ENCODE measurements at regions of chrX and their contacts with region 1.

Region 1: DNA sequence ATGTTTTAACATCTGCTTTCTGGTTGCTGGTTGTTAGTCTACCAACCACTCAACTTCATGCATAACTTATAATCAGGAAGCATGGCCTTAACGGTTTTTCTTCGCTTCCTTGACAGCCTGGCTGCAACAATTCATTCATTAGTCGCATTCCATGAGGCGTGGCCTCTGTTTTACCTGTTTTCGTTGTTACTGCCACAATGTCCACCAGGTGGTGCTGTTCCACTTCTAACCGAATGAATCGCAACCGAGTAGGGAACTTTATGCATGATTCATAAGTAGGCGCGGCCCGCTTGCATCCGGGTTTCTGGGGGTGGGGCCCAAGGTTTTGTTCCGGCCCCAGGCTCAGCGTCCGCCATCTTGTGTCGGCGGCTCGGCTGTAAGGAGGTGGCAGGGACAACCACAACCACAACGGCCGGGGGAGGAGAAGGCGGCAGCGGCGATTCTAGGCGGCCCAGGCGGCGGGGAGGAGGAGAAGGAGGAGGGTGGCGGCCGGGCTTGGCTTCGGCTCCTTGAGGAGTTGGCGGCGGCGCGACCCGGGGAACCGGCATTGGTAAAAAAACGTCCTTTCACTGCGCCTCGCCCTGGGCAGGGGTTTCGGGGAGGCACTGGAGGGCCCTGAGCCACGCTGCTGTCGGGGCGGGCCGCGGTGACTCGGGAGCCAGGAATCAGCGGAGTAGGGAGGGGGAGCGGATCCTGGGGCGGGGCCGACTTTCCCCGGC is at the start of gene UBA1:
- DNase-seq: peak; percentile 99
- H3K4me3 Mint-ChIP-seq: peak within 1 kb of the TSS; percentile 98
- H3K27ac Mint-ChIP-seq: peak within 1 kb of the TSS; percentile 99
- H3K4me1 Mint-ChIP-seq: peaks cover 28% of the 10 kb centered on the region
- H3K27me3 Mint-ChIP-seq: peaks cover 4% of the 10 kb centered on the region
- CTCF ChIP-seq: peak; percentile 60
- total RNA-seq, gene UBA1: 248 and 293 TPM in 2 replicates

Region 2: GRCh38 chrX:47068214-47068613 is 125.4 kb before region 1 on chrX:
- CTCF ChIA-PET with region 1: no interaction called
- POLR2A ChIA-PET with region 1: no interaction called
- intact Hi-C with region 1: no loop called
- DNase-seq: no peak
- H3K4me3 Mint-ChIP-seq: no peak overlapping the region
- H3K27ac Mint-ChIP-seq: no peak overlapping the region
- H3K4me1 Mint-ChIP-seq: no peaks in the 10 kb centered on the region
- H3K27me3 Mint-ChIP-seq: peaks cover 45% of the 10 kb centered on the region
- CTCF ChIP-seq: no peak

Region 3: DNA sequence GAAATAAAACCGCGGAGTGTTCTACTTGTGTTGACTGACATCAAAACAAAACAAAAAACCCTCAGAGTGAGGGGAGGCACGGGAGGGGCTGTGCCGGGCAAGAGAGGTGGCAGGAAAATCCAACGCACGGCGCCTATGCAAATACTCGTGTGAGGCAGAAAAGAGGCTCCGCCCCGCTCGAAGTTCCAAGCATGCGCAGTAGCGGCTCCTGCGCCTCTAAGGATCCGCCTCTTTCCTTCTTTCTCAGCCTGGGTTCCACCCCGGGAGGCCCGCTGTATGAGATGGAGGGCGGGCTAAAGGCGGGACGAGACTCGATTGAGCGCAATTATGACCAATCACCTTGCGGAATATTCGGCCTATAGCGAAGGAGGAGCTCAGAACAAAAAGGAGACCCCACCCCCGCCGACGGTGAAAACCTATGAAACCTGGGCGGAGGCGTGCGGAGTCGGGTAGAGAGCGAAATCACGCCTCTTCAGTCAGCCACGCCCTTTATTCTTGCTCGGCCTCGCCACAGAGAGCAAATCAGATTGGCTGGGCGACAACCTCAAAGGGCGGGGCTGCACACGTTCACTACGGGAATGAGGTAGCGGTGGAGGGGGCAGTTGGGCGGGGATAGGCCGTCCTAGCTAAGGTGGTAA is 24.1 kb after region 1 on chrX:
- CTCF ChIA-PET with region 1: interaction called, 6 read pairs
- POLR2A ChIA-PET with region 1: interaction called, 25 read pairs
- intact Hi-C with region 1: loop called (anchors 1 kb)
- DNase-seq: peak; percentile 100
- H3K4me3 Mint-ChIP-seq: peak overlapping the region; percentile 82
- H3K27ac Mint-ChIP-seq: peak overlapping the region; percentile 99
- H3K4me1 Mint-ChIP-seq: peaks cover 41% of the 10 kb centered on the region
- H3K27me3 Mint-ChIP-seq: no peaks in the 10 kb centered on the region
- CTCF ChIP-seq: no peak

Region 4: GRCh38 chrX:47384502-47384901 is 190.9 kb after region 1 on chrX:
- CTCF ChIA-PET with region 1: interaction called, 14 read pairs
- POLR2A ChIA-PET with region 1: interaction called, 3 read pairs
- intact Hi-C with region 1: loop called (anchors 1 kb)
- DNase-seq: peak; percentile 75
- H3K4me3 Mint-ChIP-seq: no peak overlapping the region
- H3K27ac Mint-ChIP-seq: no peak overlapping the region
- H3K4me1 Mint-ChIP-seq: peaks cover 5% of the 10 kb centered on the region
- H3K27me3 Mint-ChIP-seq: peaks cover 25% of the 10 kb centered on the region
- CTCF ChIP-seq: peak; percentile 60

Region 5: GRCh38 chrX:47497273-47497672 is 303.6 kb after region 1 on chrX:
- CTCF ChIA-PET with region 1: no interaction called
- POLR2A ChIA-PET with region 1: no interaction called
- intact Hi-C with region 1: loop called (anchors 1 kb)
- DNase-seq: peak; percentile 41
- H3K4me3 Mint-ChIP-seq: no peak overlapping the region
- H3K27ac Mint-ChIP-seq: no peak overlapping the region
- H3K4me1 Mint-ChIP-seq: no peaks in the 10 kb centered on the region
- H3K27me3 Mint-ChIP-seq: no peaks in the 10 kb centered on the region
- CTCF ChIP-seq: peak; percentile 46

Region 6: DNA sequence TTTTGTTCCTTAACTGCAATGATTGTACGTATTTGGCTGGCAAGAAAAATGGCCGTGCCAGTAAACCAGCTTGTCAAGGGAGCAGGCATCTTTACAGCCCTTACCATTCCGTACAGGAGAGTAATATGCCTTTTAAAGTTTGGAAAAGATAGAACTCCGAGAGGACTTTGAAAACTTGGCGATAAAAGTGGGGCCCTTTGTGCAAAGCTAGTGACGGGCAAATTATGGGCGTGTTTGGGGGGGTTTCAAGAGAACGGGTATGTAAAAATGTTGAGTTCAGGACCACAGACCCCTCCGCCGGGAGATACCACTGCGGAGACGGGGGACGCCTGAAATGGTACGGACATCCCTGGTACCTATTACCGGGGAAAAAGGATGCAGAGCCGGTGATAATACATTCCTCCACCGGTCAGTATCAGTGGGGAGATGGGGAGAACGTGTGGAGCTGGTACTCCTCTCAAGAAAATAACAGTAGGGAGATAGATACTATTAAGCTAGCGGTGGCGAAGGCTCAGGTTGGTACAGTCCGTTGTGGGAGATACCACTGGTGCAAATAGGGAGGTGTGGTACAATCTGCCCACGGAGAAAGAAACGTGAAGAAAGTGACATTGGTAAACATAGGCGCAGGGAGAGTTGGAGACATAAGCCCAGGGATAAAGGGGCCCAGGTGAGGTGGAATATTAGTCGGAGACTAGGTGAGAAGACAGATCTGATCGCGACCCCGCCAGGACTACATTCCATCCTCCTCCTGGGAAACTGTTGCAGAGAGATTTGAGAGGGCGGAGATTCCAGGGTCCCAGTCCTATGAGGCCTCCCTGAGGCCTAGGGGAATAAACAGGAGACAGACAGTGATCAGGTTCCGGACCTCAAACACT is 827.6 kb after region 1 on chrX:
- CTCF ChIA-PET with region 1: no interaction called
- POLR2A ChIA-PET with region 1: no interaction called
- intact Hi-C with region 1: loop called (anchors 10 kb)
- DNase-seq: peak; percentile 73
- H3K4me3 Mint-ChIP-seq: peak overlapping the region; percentile 89
- H3K27ac Mint-ChIP-seq: peak overlapping the region; percentile 96
- H3K4me1 Mint-ChIP-seq: peaks cover 5% of the 10 kb centered on the region
- H3K27me3 Mint-ChIP-seq: no peaks in the 10 kb centered on the region
- CTCF ChIP-seq: no peak

Measured in MCF 10A (cell line).